ENCODE measurements at regions of chr18 and their contacts with region 1.

Region 1: GRCh38 chr18:58128381-58129374 is 84.7 kb downstream of the NEDD4L start:
- DNase-seq: peak in 4 of 5 donors; percentile 67 to 93 (median 84)
- H3K4me3 ChIP-seq: peak overlapping the region in 1 of 3 donors; percentile 35
- H3K27ac ChIP-seq: peak overlapping the region; percentile 79 to 87
- H3K4me1 ChIP-seq: peaks cover 0 to 37% (median 16%) of the 10 kb centered on the region in 3 donors
- H3K27me3 ChIP-seq: no peaks in the 10 kb centered on the region
- CTCF ChIP-seq: peak; percentile 10

Region 2: DNA sequence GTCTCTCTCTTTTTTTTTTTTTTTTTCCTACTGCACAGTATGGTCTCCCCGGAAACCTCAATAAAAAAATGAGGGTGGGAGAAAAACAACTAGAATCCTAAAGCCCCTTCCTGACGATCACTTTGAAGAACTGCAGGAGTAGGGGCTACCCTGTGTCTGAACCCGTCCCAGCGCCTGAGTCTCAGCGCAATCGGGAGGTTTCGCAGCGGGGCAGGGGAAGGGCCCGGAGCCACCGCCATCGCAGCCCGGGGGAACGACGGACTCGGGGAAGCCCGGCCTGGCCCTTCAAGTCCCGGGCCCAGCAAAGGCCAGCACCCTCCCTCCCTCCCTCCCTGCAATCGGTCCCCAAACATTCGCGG is 507.5 kb before region 1 on chr18:
- intact Hi-C with region 1: no loop called
- DNase-seq: no peak
- H3K4me3 ChIP-seq: peak overlapping the region; percentile 90 to 97 (median 96)
- H3K27ac ChIP-seq: peak overlapping the region; percentile 91 to 93
- H3K4me1 ChIP-seq: peaks cover 0 to 5% (median 0%) of the 10 kb centered on the region in 3 donors
- H3K27me3 ChIP-seq: no peaks in the 10 kb centered on the region
- CTCF ChIP-seq: no peak

Region 3: DNA sequence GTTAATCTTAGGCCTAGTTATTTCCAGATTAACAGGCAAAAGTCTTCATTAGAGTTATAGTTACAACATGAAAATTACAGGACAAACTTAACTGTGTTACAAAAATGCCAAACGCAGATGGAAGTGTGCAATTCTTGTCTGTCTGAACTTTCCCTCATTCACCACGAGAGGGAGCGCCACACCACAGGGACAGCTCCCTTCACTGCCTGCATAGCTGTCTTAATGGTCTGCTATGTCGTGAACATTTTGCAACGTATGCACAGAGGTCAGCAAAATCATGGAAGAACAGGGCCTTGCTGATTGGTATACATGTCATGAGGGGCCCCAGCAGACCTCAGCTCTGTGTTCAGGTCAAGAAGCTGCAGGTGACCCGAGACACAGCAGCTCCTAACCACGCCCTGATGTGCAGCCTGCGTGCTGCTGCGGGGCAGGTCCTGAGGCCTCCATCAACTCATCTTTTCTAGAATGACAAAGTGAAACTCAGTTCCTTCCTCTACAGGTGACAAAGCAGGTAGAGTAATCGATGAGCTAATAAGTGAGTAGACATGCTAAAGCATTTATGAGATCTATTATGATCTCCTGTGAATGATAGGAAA is 246.8 kb before region 1 on chr18:
- intact Hi-C with region 1: loop called (anchors 10 kb)
- DNase-seq: peak in 4 of 5 donors; percentile 76 to 94 (median 82)
- H3K4me3 ChIP-seq: no peak overlapping the region
- H3K27ac ChIP-seq: no peak overlapping the region
- H3K4me1 ChIP-seq: no peaks in the 10 kb centered on the region
- H3K27me3 ChIP-seq: no peaks in the 10 kb centered on the region
- CTCF ChIP-seq: peak; percentile 96

Region 4: GRCh38 chr18:58025733-58026132 is 102.9 kb before region 1 on chr18:
- intact Hi-C with region 1: no loop called
- DNase-seq: no peak
- H3K4me3 ChIP-seq: no peak overlapping the region
- H3K27ac ChIP-seq: no peak overlapping the region
- H3K4me1 ChIP-seq: peaks cover 0 to 3% (median 0%) of the 10 kb centered on the region in 3 donors
- H3K27me3 ChIP-seq: no peaks in the 10 kb centered on the region
- CTCF ChIP-seq: no peak

Region 5: DNA sequence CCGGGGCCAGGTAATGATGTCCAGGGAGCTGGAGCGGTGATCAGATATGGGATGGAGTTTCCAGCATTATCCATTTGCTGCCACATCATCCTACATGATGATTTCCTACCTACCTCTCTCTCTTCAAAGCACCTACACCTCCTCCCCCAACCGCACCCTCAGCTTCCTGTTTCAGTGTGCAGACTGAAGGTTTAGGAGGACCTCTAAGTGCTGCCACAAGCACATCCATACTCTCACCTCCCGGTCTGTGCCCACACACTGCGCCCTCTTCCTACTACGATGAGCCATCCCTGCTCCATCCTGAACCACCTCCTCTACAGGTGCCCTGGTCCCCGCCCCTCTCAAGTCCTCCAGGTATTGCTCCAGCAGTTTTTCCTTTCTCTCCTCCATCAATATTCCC is 376.5 kb after region 1 on chr18:
- intact Hi-C with region 1: no loop called
- DNase-seq: no peak
- H3K4me3 ChIP-seq: no peak overlapping the region
- H3K27ac ChIP-seq: no peak overlapping the region
- H3K4me1 ChIP-seq: peaks cover 0 to 13% (median 9%) of the 10 kb centered on the region in 3 donors
- H3K27me3 ChIP-seq: no peaks in the 10 kb centered on the region
- CTCF ChIP-seq: no peak

Measured in kidney (tissue), 22 donors.